PC-9 (cell line): ENCODE measurements at regions of chr13 and their contacts with region 1.

Region 1: GRCh38 chr13:87777395-87777794 is 106.2 kb downstream of the SLITRK5 start:
- DNase-seq: no peak
- H3K4me3 ChIP-seq: no peak overlapping the region
- H3K27ac ChIP-seq: no peak overlapping the region
- H3K4me1 ChIP-seq: no peaks in the 10 kb centered on the region
- H3K27me3 ChIP-seq: no peaks in the 10 kb centered on the region
- CTCF ChIP-seq: no peak

Region 2: GRCh38 chr13:87754097-87754496 is 23.3 kb before region 1 on chr13:
- CTCF ChIA-PET with region 1: interaction called, 11 read pairs
- POLR2A ChIA-PET with region 1: no interaction called
- intact Hi-C with region 1: no loop called
- DNase-seq: no peak
- H3K4me3 ChIP-seq: no peak overlapping the region
- H3K27ac ChIP-seq: no peak overlapping the region
- H3K4me1 ChIP-seq: no peaks in the 10 kb centered on the region
- H3K27me3 ChIP-seq: no peaks in the 10 kb centered on the region
- CTCF ChIP-seq: no peak